ENCODE measurements at regions of chr3 and their contacts with region 1.

Region 1: GRCh38 chr3:48898383-48899234 is at the start of gene SLC25A20:
- DNase-seq: peak; percentile 80
- ATAC-seq: peak; percentile 83
- H3K4me3 ChIP-seq: peak within 1 kb of the TSS; percentile 71 to 94 (median 84)
- H3K27ac ChIP-seq: peak within 1 kb of the TSS; percentile 78
- H3K4me1 ChIP-seq: peaks cover 42% of the 10 kb centered on the region
- H3K27me3 ChIP-seq: no peaks in the 10 kb centered on the region
- CTCF ChIP-seq: no peak; the same call in 1 of the 2 replicates
- EP300 ChIP-seq: no peak
- POLR2A ChIP-seq: no peak
- RAD21 ChIP-seq: peak; percentile 37; the same call in 1 of the 2 replicates
- total RNA-seq, gene SLC25A20: 25.4 and 26.6 TPM in 2 replicates

Region 2: DNA sequence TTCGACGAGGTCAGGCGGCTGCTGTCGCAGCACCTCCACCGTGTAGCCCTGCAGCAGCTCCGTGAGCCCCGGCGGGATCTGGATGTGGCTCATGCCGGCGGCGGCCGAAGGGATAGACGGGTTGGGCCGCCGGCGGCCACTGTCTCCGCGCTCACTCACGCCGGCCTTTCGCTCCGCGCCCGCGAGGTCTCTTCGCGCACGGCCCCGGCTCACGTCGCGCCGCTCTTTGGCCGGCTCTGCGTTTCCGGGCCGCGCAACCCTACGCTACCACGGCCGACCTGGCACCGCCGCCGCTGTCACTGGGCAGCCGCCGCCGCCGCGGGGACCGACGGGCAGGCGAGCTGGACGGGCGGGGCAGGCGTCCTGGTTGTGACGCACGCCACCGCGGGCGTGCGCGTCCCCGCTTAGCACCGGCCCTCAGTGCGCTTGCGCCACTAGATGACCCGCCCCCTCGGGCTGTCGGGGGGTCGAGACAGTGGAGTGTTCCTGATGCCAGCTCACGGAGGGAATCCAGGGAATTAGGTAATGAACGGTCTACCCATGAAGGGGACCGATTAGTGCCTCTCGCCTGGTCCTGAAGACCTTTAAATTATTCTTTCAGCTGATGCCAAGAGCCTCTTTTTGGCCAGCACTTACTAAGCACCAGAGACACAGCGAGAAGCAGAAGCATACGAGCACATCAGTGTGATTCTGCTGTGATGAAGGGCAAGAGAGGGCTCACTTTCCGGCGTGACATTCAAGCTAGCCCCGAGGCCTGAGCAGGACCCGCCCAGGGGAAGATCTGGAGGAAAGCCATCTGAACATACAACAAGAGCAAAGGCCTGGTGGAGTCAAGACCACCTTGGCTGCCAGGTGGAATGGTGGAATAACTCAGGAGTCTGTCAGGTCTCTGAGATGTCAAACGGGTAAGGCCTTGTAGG is 50.8 kb before region 1 on chr3 and contains the start of gene PRKAR2A:
- CTCF ChIA-PET with region 1: no interaction called
- POLR2A ChIA-PET with region 1: interaction called, 27 read pairs
- in situ Hi-C with region 1: no loop called
- intact Hi-C with region 1: loop called (anchors 1 kb)
- DNase-seq: peak; percentile 73
- ATAC-seq: peak; percentile 92
- H3K4me3 ChIP-seq: peak within 1 kb of the TSS; percentile 67 to 89 (median 78)
- H3K27ac ChIP-seq: peak within 1 kb of the TSS; percentile 88
- H3K4me1 ChIP-seq: peaks cover 26% of the 10 kb centered on the region
- H3K27me3 ChIP-seq: no peaks in the 10 kb centered on the region
- CTCF ChIP-seq: no peak; the same call in 1 of the 2 replicates
- EP300 ChIP-seq: no peak
- POLR2A ChIP-seq: peak; percentile 58 to 89; a peak in 3 of 4 replicates
- RAD21 ChIP-seq: peak; percentile 31
- total RNA-seq, gene PRKAR2A: 29.2 and 38.5 TPM in 2 replicates

Region 3: GRCh38 chr3:48855681-48856447 is 42.7 kb before region 1 on chr3:
- CTCF ChIA-PET with region 1: no interaction called
- POLR2A ChIA-PET with region 1: interaction called, 12 read pairs
- in situ Hi-C with region 1: no loop called
- intact Hi-C with region 1: loop called (anchors 1 kb)
- DNase-seq: peak; percentile 87
- ATAC-seq: peak; percentile 98
- H3K4me3 ChIP-seq: no peak overlapping the region
- H3K27ac ChIP-seq: peak overlapping the region; percentile 57
- H3K4me1 ChIP-seq: peaks cover 18% of the 10 kb centered on the region
- H3K27me3 ChIP-seq: no peaks in the 10 kb centered on the region
- CTCF ChIP-seq: peak; percentile 69
- EP300 ChIP-seq: 0 out of 4 replicates have a peak, but pooled peaks of 1 of the 2 experiments have one; percentile 25
- POLR2A ChIP-seq: no peak
- RAD21 ChIP-seq: peak; percentile 70

Region 4: GRCh38 chr3:48885753-48886152 is 12.9 kb before region 1 on chr3:
- CTCF ChIA-PET with region 1: no interaction called
- POLR2A ChIA-PET with region 1: interaction called, 22 read pairs
- in situ Hi-C with region 1: no loop called
- intact Hi-C with region 1: no loop called
- DNase-seq: no peak
- ATAC-seq: peak; percentile 69
- H3K4me3 ChIP-seq: no peak overlapping the region
- H3K27ac ChIP-seq: no peak overlapping the region
- H3K4me1 ChIP-seq: peaks cover 37% of the 10 kb centered on the region
- H3K27me3 ChIP-seq: no peaks in the 10 kb centered on the region
- CTCF ChIP-seq: no peak
- EP300 ChIP-seq: no peak
- POLR2A ChIP-seq: no peak
- RAD21 ChIP-seq: no peak

Region 5: GRCh38 chr3:49493901-49494300 is 595.3 kb after region 1 on chr3:
- CTCF ChIA-PET with region 1: no interaction called
- POLR2A ChIA-PET with region 1: no interaction called
- in situ Hi-C with region 1: no loop called
- intact Hi-C with region 1: no loop called
- DNase-seq: no peak
- ATAC-seq: no peak
- H3K4me3 ChIP-seq: no peak overlapping the region
- H3K27ac ChIP-seq: no peak overlapping the region
- H3K4me1 ChIP-seq: peaks cover 19% of the 10 kb centered on the region
- H3K27me3 ChIP-seq: no peaks in the 10 kb centered on the region
- CTCF ChIP-seq: no peak
- EP300 ChIP-seq: no peak
- POLR2A ChIP-seq: no peak
- RAD21 ChIP-seq: no peak